Esophagus muscularis mucosa (tissue), 4 donors: ENCODE measurements at regions of chr7 and their contacts with region 1.

Region 1: DNA sequence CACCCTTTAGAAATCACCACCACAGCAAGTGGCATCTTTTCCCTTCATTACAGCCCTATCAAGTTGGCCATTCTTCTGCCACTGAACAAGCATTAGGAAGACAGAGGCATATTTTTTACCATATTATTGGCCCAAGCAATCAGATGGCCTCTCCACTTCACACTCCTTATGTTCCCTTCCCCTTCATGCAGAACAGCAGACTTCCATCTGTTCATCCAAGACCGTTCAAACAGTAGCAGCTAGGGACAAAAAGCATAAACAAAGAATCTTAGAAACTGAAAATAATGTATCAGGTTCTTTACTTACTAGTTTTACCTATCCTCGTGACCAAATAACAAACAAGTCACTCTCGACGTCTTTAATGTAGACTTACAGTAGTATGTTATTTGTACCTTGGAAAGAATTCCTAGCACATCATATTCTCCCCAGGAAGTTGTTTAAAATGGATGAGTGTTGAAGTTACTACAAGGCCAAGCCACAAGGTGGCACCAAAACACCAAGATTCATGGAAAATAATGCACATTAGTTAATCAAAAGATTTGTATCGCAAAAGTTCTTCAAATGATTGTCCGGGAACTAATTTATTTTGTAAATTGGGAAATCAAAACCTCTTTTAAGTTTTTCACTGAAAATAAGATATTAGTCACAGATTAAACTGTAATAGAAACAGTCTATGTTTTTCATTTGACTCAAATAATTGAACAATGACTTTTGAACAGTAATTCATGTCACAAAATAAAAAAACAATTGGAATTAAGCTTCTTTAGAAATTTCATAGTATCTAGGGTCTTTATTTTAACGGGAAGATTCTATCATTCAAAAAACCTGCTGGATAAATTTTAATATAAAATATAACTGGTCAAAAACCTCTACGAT is 112.1 kb downstream of the VPS41 start:
- DNase-seq: no peak
- H3K4me3 ChIP-seq: no peak overlapping the region
- H3K27ac ChIP-seq: no peak overlapping the region
- H3K4me1 ChIP-seq: no peaks in the 10 kb centered on the region
- H3K27me3 ChIP-seq: no peaks in the 10 kb centered on the region
- CTCF ChIP-seq: peak; percentile 64 to 75 (median 74)
- EP300 ChIP-seq: no peak
- POLR2A ChIP-seq: no peak

Region 2: GRCh38 chr7:38748056-38748611 is 48.7 kb before region 1 on chr7:
- intact Hi-C with region 1: no loop called
- DNase-seq: no peak
- H3K4me3 ChIP-seq: no peak overlapping the region
- H3K27ac ChIP-seq: no peak overlapping the region
- H3K4me1 ChIP-seq: no peaks in the 10 kb centered on the region
- H3K27me3 ChIP-seq: no peaks in the 10 kb centered on the region
- CTCF ChIP-seq: peak; percentile 19 to 27 (median 24)
- EP300 ChIP-seq: no peak
- POLR2A ChIP-seq: no peak

Region 3: GRCh38 chr7:39465055-39465929 is 668.4 kb after region 1 on chr7:
- intact Hi-C with region 1: loop called (anchors 2 kb)
- DNase-seq: peak; percentile 47
- H3K4me3 ChIP-seq: peak overlapping the region in 1 of 4 donors; percentile 1
- H3K27ac ChIP-seq: no peak overlapping the region
- H3K4me1 ChIP-seq: peaks cover 0 to 8% (median 3%) of the 10 kb centered on the region in 4 donors
- H3K27me3 ChIP-seq: no peaks in the 10 kb centered on the region
- CTCF ChIP-seq: peak; percentile 58 to 80 (median 70)
- EP300 ChIP-seq: no peak
- POLR2A ChIP-seq: no peak

Region 4: GRCh38 chr7:39517240-39517639 is 720.4 kb after region 1 on chr7:
- intact Hi-C with region 1: loop called (anchors 5 kb)
- DNase-seq: peak; percentile 82
- H3K4me3 ChIP-seq: no peak overlapping the region
- H3K27ac ChIP-seq: no peak overlapping the region
- H3K4me1 ChIP-seq: peaks cover 0 to 5% (median 2%) of the 10 kb centered on the region in 4 donors
- H3K27me3 ChIP-seq: peaks cover 0 to 9% (median 0%) of the 10 kb centered on the region in 4 donors
- CTCF ChIP-seq: no peak
- EP300 ChIP-seq: no peak
- POLR2A ChIP-seq: no peak

Region 5: GRCh38 chr7:39746103-39746819 is 949.4 kb after region 1 on chr7:
- intact Hi-C with region 1: loop called (anchors 10 kb)
- DNase-seq: no peak
- H3K4me3 ChIP-seq: no peak overlapping the region
- H3K27ac ChIP-seq: no peak overlapping the region
- H3K4me1 ChIP-seq: no peaks in the 10 kb centered on the region
- H3K27me3 ChIP-seq: no peaks in the 10 kb centered on the region
- CTCF ChIP-seq: peak; percentile 64 to 73 (median 72)
- EP300 ChIP-seq: no peak
- POLR2A ChIP-seq: no peak